Stomach (tissue), 19 donors: ENCODE measurements at regions of chr15 and their contacts with region 1.

Region 1: DNA sequence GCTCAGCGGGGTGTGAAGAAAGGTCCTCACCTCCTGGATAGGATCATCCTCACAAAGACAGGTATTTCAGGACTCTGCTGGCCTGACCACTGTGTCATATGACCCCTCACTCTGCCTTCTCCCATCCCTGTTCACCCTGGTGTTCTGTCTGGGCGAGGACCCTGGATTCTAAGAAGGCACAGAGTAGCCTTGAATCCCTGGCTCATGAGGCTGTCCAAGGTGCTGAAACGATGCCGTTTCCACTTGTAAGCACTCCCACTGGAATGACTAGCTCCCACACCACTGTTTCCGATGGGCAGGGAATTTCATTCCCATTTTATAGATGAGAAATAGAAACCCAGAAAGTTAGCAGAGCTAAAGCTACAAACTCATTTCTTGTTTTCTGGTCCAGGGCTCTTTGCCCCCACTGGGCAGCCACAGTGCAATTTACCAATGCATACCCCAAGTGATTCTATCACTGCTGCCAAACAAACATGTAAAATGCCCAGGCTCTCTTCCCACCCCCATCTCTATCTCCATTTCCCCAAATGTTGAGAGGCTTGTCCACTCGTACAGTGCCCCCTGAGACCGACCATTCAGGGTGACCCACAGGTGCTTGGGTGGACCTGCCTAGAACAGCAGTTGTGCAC is 83.2 kb downstream of the RAB11A start:
- DNase-seq: peak in 1 of 2 donors; percentile 83
- H3K4me3 ChIP-seq: no peak overlapping the region
- H3K27ac ChIP-seq: no peak overlapping the region
- H3K4me1 ChIP-seq: no peaks in the 10 kb centered on the region
- H3K27me3 ChIP-seq: peaks cover 0 to 21% (median 0%) of the 10 kb centered on the region in 3 donors
- CTCF ChIP-seq: no peak
- EP300 ChIP-seq: no peak
- POLR2A ChIP-seq: no peak

Region 2: GRCh38 chr15:65832549-65833364 is 119.8 kb before region 1 on chr15:
- intact Hi-C with region 1: no loop called
- DNase-seq: peak; percentile 89 to 96
- H3K4me3 ChIP-seq: peak overlapping the region; percentile 3 to 25 (median 6)
- H3K27ac ChIP-seq: peak overlapping the region; percentile 79 to 94 (median 86)
- H3K4me1 ChIP-seq: peaks cover 26 to 49% (median 39%) of the 10 kb centered on the region in 4 donors
- H3K27me3 ChIP-seq: no peaks in the 10 kb centered on the region
- CTCF ChIP-seq: no peak
- EP300 ChIP-seq: no peak
- POLR2A ChIP-seq: no peak

Region 3: GRCh38 chr15:65902378-65902777 is 50.2 kb before region 1 on chr15:
- intact Hi-C with region 1: loop called (anchors 5 kb)
- DNase-seq: peak; percentile 53 to 83
- H3K4me3 ChIP-seq: no peak overlapping the region
- H3K27ac ChIP-seq: peak overlapping the region in 1 of 5 donors; percentile 57
- H3K4me1 ChIP-seq: peaks cover 0 to 41% (median 8%) of the 10 kb centered on the region in 4 donors
- H3K27me3 ChIP-seq: no peaks in the 10 kb centered on the region
- CTCF ChIP-seq: no peak
- EP300 ChIP-seq: no peak
- POLR2A ChIP-seq: no peak